ENCODE measurements at regions of chrX and their contacts with region 1.

Region 1: GRCh38 chrX:48891402-48892288 is 5.9 kb downstream of the TIMM17B start:
- DNase-seq: peak; percentile 87
- ATAC-seq: peak; percentile 84
- H3K4me3 ChIP-seq: peak overlapping the region in 4 of 5 experiments; percentile 46 to 65 (median 60)
- H3K4me3 Mint-ChIP-seq: peak overlapping the region; percentile 84
- H3K27ac ChIP-seq: peak overlapping the region in 1 of 2 donors; percentile 48
- H3K27ac Mint-ChIP-seq: peak overlapping the region; percentile 73
- H3K4me1 ChIP-seq: peaks cover 6 to 9% of the 10 kb centered on the region in 2 donors
- H3K4me1 Mint-ChIP-seq: peaks cover 19% of the 10 kb centered on the region
- H3K27me3 ChIP-seq: no peaks in the 10 kb centered on the region
- H3K27me3 Mint-ChIP-seq: no peaks in the 10 kb centered on the region
- CTCF ChIP-seq: peak; percentile 60

Region 2: DNA sequence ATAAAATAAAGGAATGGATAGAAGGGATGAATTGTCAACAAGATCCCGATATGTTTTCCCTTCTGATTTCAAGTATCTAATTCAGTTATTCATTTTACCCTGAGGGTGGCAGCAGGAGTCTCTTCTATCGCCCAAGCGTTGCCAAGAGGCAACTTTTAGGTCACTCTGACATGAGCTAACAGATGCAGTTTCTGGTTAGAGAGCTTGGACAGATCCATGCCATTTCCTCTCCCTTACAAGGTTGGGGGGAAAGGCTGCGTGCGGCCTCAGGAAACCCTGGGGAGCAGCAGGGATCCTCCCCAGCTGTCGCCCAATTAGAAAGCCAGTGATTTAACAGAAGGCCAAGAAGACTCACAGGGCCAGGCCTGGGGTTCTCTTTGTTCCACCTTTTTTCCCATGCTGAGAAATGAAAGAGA is 243.3 kb before region 1 on chrX:
- CTCF ChIA-PET with region 1: interaction called, 4 read pairs
- POLR2A ChIA-PET with region 1: no interaction called
- intact Hi-C with region 1: loop called (anchors 5 kb)
- DNase-seq: peak; percentile 60
- ATAC-seq: peak; percentile 73
- H3K4me3 ChIP-seq: no peak overlapping the region
- H3K4me3 Mint-ChIP-seq: no peak overlapping the region
- H3K27ac ChIP-seq: no peak overlapping the region
- H3K27ac Mint-ChIP-seq: peak overlapping the region; percentile 70
- H3K4me1 ChIP-seq: no peaks in the 10 kb centered on the region
- H3K4me1 Mint-ChIP-seq: no peaks in the 10 kb centered on the region
- H3K27me3 ChIP-seq: no peaks in the 10 kb centered on the region
- H3K27me3 Mint-ChIP-seq: no peaks in the 10 kb centered on the region
- CTCF ChIP-seq: peak; percentile 65

Region 3: DNA sequence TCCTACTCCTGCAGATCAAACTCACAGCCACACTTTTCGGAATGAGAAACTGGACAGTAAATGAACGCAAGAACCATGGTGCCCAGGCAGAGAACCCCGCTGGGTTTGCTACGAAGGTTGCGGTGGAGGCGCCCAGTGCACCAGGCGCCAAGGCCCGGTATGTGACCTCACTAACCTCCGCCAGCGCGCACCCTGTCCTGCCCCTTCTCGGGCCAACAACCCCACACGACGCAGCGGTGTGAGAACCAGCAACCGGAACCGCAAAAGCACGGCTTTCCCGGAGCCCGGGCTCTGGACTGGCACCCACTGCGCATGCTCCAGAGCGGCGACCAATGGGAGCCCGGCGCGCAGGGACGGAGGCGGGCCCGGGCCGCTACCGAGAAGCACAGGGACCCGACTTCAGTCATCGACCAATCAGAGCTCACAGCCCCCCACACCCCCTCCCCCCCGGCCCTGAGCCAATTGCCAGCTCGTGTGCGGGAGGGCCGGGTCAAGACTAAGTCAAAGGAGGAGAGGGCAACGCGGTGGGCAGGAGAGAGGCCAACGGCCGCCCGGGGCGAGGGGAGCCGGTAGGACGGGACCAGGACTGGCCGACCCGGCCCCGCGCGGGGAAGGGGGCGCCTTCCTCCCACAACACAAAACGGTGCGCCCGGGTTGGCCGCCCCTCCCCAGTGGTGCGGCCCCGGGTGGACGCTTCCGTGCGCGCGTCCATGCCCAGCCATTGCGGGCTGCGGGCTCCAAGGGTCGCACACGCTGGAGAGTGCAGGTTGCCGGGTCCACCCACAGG is 215.3 kb before region 1 on chrX:
- CTCF ChIA-PET with region 1: no interaction called
- POLR2A ChIA-PET with region 1: no interaction called
- intact Hi-C with region 1: loop called (anchors 1 kb)
- DNase-seq: peak; percentile 91
- ATAC-seq: peak; percentile 95
- H3K4me3 ChIP-seq: peak overlapping the region; percentile 47 to 75 (median 68)
- H3K4me3 Mint-ChIP-seq: peak overlapping the region; percentile 91
- H3K27ac ChIP-seq: peak overlapping the region; percentile 77 to 85
- H3K27ac Mint-ChIP-seq: peak overlapping the region; percentile 93
- H3K4me1 ChIP-seq: peaks cover 0 to 26% of the 10 kb centered on the region in 2 donors
- H3K4me1 Mint-ChIP-seq: peaks cover 18% of the 10 kb centered on the region
- H3K27me3 ChIP-seq: no peaks in the 10 kb centered on the region
- H3K27me3 Mint-ChIP-seq: no peaks in the 10 kb centered on the region
- CTCF ChIP-seq: no peak

Region 4: GRCh38 chrX:48801280-48802088 is 90.2 kb before region 1 on chrX and contains the start of gene HDAC6:
- CTCF ChIA-PET with region 1: no interaction called
- POLR2A ChIA-PET with region 1: no interaction called
- intact Hi-C with region 1: loop called (anchors 2 kb)
- DNase-seq: peak; percentile 97
- ATAC-seq: peak; percentile 80
- H3K4me3 ChIP-seq: peak within 1 kb of the TSS; percentile 65 to 82 (median 76)
- H3K4me3 Mint-ChIP-seq: peak within 1 kb of the TSS; percentile 96
- H3K27ac ChIP-seq: peak within 1 kb of the TSS; percentile 95 to 96
- H3K27ac Mint-ChIP-seq: peak within 1 kb of the TSS; percentile 98
- H3K4me1 ChIP-seq: peaks cover 4 to 16% of the 10 kb centered on the region in 2 donors
- H3K4me1 Mint-ChIP-seq: peaks cover 14% of the 10 kb centered on the region
- H3K27me3 ChIP-seq: no peaks in the 10 kb centered on the region
- H3K27me3 Mint-ChIP-seq: no peaks in the 10 kb centered on the region
- CTCF ChIP-seq: no peak
- total RNA-seq, gene HDAC6: 168 and 170 TPM in 2 replicates

Region 5: DNA sequence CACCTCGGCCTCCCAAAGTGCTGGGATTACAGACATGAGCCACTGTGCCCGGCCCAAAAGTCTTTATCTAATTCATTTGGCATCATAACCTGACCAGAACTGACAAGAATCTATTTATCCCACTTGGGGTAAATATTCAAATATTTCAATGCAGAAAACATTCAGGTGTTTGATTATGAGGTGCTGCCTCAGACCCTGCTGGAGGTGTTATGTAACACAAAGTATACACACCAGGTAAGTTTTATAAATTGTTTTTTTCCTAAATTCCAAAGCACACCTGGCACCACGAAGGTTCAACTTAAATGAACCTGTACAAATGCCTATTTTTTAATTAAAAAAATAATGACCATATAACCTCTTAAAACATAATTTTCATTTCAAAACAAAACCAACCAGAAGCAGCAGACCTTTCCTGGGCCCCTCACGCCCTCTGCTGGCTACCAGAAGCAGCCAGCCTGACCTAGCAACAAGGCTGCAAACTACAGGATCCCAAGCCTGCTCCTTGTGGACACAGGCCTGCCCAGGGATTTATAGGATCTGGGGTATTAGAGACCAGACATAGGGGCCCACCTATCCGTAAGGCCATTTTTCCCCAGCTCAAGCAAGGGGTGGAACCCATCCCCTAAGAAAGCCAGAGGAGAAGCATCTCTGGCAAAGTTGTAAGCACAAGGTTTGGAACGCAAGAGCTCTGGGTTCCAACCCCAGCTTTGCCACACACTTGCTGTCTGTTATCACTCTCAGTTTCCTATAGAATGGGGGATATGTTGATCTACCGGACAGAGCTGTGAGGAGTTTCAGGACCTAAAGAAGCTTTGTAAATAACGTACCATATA is 54.1 kb after region 1 on chrX:
- CTCF ChIA-PET with region 1: interaction called, 33 read pairs
- POLR2A ChIA-PET with region 1: interaction called, 3 read pairs
- intact Hi-C with region 1: no loop called
- DNase-seq: peak; percentile 65
- ATAC-seq: peak; percentile 65
- H3K4me3 ChIP-seq: no peak overlapping the region
- H3K4me3 Mint-ChIP-seq: no peak overlapping the region
- H3K27ac ChIP-seq: no peak overlapping the region
- H3K27ac Mint-ChIP-seq: peak overlapping the region; percentile 20
- H3K4me1 ChIP-seq: peaks cover 23 to 39% of the 10 kb centered on the region in 2 donors
- H3K4me1 Mint-ChIP-seq: peaks cover 43% of the 10 kb centered on the region
- H3K27me3 ChIP-seq: no peaks in the 10 kb centered on the region
- H3K27me3 Mint-ChIP-seq: no peaks in the 10 kb centered on the region
- CTCF ChIP-seq: peak; percentile 83